Endothelial cell of umbilical vein (primary cell): ENCODE measurements at regions of chr1 and their contacts with region 1.

Region 1: GRCh38 chr1:91804546-91805023 is 81.4 kb downstream of the TGFBR3 start:
- DNase-seq: no peak
- H3K4me3 ChIP-seq: no peak overlapping the region
- H3K27ac ChIP-seq: no peak overlapping the region
- H3K4me1 ChIP-seq: peaks cover 18% of the 10 kb centered on the region
- H3K27me3 ChIP-seq: no peaks in the 10 kb centered on the region
- CTCF ChIP-seq: no peak
- POLR2A ChIP-seq: no peak

Region 2: DNA sequence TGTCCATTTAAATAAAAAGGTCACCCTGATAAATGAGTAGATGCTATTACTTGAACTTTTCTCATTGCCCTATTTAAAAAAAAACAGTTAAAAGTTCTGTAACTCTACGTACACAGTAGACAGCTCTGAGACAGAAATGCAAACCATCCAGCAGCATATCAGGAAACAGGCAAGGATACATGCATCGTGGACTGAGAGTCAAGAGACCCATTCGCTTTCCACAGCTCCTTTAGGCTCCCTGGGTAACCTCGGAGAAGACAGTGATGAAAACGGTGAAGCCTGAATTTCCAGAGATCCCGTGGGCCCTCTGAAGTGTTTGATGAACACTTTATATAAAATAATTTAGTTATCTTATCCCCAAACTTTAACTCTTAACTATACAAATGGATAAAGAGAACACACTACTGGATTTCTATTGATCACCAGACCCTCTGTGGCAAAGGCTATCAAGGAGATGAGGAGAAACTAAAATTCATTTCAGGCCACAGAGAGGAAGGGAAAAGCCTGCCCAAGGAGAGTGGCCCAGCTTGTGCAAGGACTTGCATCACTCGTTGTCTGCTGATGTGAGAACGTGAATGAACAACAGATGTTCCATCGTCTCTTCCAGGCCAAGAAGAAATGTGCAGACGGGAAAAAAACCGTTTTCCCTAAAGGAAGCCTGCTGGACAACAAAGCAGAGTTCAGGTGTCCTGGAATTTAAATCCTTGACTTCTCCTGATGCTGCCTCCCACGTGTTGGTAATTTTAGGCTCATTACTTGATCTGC is 49.6 kb before region 1 on chr1:
- CTCF ChIA-PET with region 1: no interaction called
- POLR2A ChIA-PET with region 1: no interaction called
- dilution Hi-C with region 1: no loop called
- intact Hi-C with region 1: loop called (anchors 5 kb)
- DNase-seq: no peak
- H3K4me3 ChIP-seq: no peak overlapping the region
- H3K27ac ChIP-seq: no peak overlapping the region
- H3K4me1 ChIP-seq: no peaks in the 10 kb centered on the region
- H3K27me3 ChIP-seq: no peaks in the 10 kb centered on the region
- CTCF ChIP-seq: no peak
- POLR2A ChIP-seq: no peak

Region 3: DNA sequence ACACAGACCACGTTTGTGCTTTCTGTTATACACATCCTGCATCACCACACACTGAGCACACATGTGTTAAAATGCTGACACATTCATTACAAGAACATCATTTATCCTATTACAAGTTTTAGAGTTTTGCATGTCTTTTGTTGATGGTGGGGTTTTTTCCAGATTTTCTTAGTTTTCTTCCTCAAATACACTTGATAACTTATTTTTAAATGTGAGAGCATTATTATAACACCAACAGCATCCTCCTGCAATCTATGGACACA is 14.1 kb after region 1 on chr1:
- CTCF ChIA-PET with region 1: interaction called, 3 read pairs
- POLR2A ChIA-PET with region 1: no interaction called
- dilution Hi-C with region 1: no loop called
- intact Hi-C with region 1: loop called (anchors 1 kb)
- DNase-seq: no peak
- H3K4me3 ChIP-seq: no peak overlapping the region
- H3K27ac ChIP-seq: no peak overlapping the region
- H3K4me1 ChIP-seq: peaks cover 18% of the 10 kb centered on the region
- H3K27me3 ChIP-seq: no peaks in the 10 kb centered on the region
- CTCF ChIP-seq: no peak
- POLR2A ChIP-seq: no peak